Activated CD4-positive, alpha-beta T cell treated with anti-CD3 and anti-CD28 coated beads for 36 hours (primary cell): ENCODE measurements at regions of chr17 and their contacts with region 1.

Region 1: DNA sequence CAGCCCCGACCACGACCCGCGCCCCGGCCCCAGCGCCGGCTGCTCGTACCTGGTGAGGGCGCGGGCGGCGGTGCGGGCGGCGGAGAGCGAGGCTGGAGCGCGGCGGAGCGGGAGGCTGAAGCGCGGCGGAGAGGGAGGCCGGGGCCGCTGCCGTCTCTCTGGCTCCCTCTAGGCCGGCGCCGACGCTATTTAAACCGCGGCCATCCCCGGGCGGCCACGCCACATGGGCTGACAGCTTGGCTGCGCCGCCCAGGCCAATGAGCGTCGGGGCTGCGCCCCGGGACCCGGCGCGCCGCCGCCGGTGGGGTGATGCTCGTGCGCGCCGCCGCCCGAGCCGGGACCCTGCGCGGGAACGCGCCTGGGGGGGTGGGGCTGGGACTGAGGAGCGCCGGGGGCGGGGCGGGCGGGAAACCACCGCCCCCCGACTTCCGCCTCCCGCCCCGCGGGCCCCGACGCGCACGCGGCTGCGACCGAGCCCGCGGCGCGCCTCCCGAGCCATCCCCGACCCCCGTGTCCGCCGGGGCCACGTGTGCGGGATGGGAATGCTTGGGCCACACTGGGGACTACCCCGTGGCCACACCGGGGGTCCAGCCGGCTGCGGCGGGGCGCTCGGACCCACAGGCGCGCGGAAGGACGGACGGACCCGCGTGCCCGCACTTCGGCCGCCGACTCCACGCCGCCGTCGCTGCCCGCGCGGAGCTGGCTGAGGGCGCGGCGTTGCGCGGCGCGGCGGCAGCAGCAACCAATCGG is at the start of gene FASN:
- DNase-seq: peak; percentile 97
- ATAC-seq: peak; percentile 86
- H3K4me3 Mint-ChIP-seq: peak within 1 kb of the TSS; percentile 78
- H3K27ac Mint-ChIP-seq: peak within 1 kb of the TSS; percentile 19
- H3K4me1 Mint-ChIP-seq: peaks cover 14% of the 10 kb centered on the region
- H3K27me3 Mint-ChIP-seq: no peaks in the 10 kb centered on the region
- total RNA-seq, gene FASN: 239 to 259 TPM

Region 2: DNA sequence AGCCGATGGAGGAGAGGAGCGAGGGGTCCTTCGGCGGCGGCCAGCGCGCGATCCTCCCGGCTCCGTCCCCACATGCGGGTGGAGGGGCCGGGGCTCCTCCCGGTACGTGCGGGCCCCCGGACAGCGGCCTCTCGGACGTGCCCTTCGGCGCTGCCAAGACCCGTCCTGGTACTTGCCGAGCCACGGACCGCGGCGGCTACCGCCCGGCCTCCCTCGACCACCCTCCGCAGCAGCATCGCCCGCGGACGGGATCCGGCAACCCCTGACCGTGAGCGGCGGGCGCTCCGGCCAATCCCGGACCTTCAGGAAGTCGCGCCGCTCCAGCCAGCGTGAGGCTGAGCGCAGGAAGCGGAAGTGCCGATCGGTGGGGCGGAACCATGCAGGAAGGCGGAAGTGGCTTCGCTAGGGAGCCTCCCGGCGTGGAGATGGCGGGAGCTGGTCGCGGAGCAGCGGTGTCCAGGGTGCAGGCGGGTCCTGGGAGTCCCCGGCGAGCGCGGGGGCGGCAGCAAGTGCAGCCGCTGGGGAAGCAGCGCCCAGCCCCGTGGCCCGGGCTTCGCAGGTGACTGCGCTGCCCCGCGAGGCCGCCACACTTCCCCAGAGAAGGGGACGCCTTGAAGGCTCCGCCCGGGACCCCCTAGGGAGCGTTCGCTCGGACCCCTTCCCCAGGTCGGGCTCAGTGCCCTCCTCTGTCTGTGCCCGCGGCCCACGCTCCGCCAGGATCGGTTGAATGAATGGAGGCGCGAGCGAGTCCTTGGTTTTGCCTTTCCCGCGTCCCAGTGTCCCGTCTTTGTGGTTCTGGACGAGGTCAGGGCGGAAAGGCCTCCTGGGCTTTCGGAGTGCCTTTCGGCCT is 431.7 kb before region 1 on chr17 and contains the starts of genes CCDC137 and OXLD1:
- CTCF ChIA-PET with region 1: no interaction called
- POLR2A ChIA-PET with region 1: no interaction called
- intact Hi-C with region 1: loop called in 1 of 2 experiments (anchors 1 kb)
- DNase-seq: peak; percentile 97
- ATAC-seq: peak; percentile 91
- H3K4me3 Mint-ChIP-seq: peak within 1 kb of the TSS; percentile 91
- H3K27ac Mint-ChIP-seq: peak within 1 kb of the TSS; percentile 97
- H3K4me1 Mint-ChIP-seq: peaks cover 53% of the 10 kb centered on the region
- H3K27me3 Mint-ChIP-seq: no peaks in the 10 kb centered on the region
- total RNA-seq, gene CCDC137: 30.0 to 36.6 TPM
- total RNA-seq, gene OXLD1: 29.4 to 45.3 TPM

Region 3: DNA sequence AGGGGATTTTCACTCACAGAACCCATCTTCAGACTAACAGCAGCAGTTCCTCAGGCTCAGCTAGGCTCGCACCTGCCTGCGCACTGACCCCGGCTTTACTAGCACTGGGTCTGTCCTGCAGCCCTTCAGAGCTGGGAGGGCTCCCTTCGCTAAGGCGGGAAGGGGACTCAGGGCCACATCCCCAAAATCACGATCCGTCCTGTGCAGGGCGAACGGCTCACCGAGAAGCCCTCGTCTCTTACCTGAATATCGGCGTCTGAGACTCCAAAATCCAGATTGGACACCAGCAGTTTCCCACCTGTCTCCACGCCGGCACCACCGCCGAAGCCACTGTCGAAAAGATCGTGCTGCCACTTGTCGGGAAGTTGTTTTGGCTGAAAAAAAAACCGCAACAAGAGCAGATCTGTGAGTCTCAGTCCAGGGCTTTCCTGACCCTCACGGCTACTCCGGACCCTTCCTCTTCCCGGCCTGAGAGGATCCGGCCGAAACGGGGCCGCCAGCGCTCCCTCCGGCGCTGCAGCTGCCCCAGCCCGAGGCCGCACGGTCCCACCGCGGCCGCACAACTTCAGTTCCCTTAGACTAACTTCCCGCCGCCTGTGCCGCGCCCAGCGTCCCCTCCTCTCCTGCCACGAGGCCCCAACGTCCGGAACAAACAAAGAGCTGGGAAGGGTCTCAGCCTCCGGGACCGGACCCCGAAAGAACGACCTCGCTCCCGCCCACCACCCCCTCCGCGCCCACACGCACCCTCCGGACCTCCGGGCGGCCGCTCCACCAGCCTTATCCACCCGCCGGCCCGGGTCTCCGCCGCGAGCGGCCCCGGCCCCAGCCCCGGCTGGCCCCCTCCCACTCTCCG is 207.6 kb before region 1 on chr17:
- CTCF ChIA-PET with region 1: no interaction called
- POLR2A ChIA-PET with region 1: no interaction called
- intact Hi-C with region 1: loop called in 1 of 2 experiments (anchors 1 kb)
- DNase-seq: peak; percentile 51
- ATAC-seq: no peak
- H3K4me3 Mint-ChIP-seq: peak overlapping the region; percentile 85
- H3K27ac Mint-ChIP-seq: peak overlapping the region; percentile 93
- H3K4me1 Mint-ChIP-seq: peaks cover 32% of the 10 kb centered on the region
- H3K27me3 Mint-ChIP-seq: no peaks in the 10 kb centered on the region

Region 4: GRCh38 chr17:81967533-81968395 is 130.5 kb before region 1 on chr17:
- CTCF ChIA-PET with region 1: no interaction called
- POLR2A ChIA-PET with region 1: no interaction called
- intact Hi-C with region 1: loop called in 1 of 2 experiments (anchors 2 kb)
- DNase-seq: peak; percentile 95
- ATAC-seq: peak; percentile 95
- H3K4me3 Mint-ChIP-seq: peak overlapping the region; percentile 60
- H3K27ac Mint-ChIP-seq: peak overlapping the region; percentile 88
- H3K4me1 Mint-ChIP-seq: peaks cover 15% of the 10 kb centered on the region
- H3K27me3 Mint-ChIP-seq: no peaks in the 10 kb centered on the region

Region 5: GRCh38 chr17:82051776-82052637 is 46.2 kb before region 1 on chr17 and contains the starts of genes GPS1 and RFNG:
- CTCF ChIA-PET with region 1: no interaction called
- POLR2A ChIA-PET with region 1: interaction called, 3 read pairs
- intact Hi-C with region 1: loop called in 1 of 2 experiments (anchors 1 kb)
- DNase-seq: peak; percentile 90
- ATAC-seq: peak; percentile 91
- H3K4me3 Mint-ChIP-seq: peak within 1 kb of the TSS; percentile 82
- H3K27ac Mint-ChIP-seq: peak within 1 kb of the TSS; percentile 73
- H3K4me1 Mint-ChIP-seq: peaks cover 21% of the 10 kb centered on the region
- H3K27me3 Mint-ChIP-seq: no peaks in the 10 kb centered on the region
- total RNA-seq, gene GPS1: 69.0 to 73.5 TPM
- total RNA-seq, gene RFNG: 16.9 to 17.5 TPM

Region 6: GRCh38 chr17:82086941-82087906 is 11.0 kb before region 1 on chr17:
- CTCF ChIA-PET with region 1: no interaction called
- POLR2A ChIA-PET with region 1: no interaction called
- intact Hi-C with region 1: no loop called
- DNase-seq: no peak
- ATAC-seq: no peak
- H3K4me3 Mint-ChIP-seq: no peak overlapping the region
- H3K27ac Mint-ChIP-seq: no peak overlapping the region
- H3K4me1 Mint-ChIP-seq: no peaks in the 10 kb centered on the region
- H3K27me3 Mint-ChIP-seq: no peaks in the 10 kb centered on the region

Region 7: GRCh38 chr17:82116246-82116645 is 18.0 kb after region 1 on chr17:
- CTCF ChIA-PET with region 1: no interaction called
- POLR2A ChIA-PET with region 1: no interaction called
- intact Hi-C with region 1: no loop called
- DNase-seq: no peak
- ATAC-seq: no peak
- H3K4me3 Mint-ChIP-seq: no peak overlapping the region
- H3K27ac Mint-ChIP-seq: no peak overlapping the region
- H3K4me1 Mint-ChIP-seq: peaks cover 14% of the 10 kb centered on the region
- H3K27me3 Mint-ChIP-seq: no peaks in the 10 kb centered on the region

Region 8: DNA sequence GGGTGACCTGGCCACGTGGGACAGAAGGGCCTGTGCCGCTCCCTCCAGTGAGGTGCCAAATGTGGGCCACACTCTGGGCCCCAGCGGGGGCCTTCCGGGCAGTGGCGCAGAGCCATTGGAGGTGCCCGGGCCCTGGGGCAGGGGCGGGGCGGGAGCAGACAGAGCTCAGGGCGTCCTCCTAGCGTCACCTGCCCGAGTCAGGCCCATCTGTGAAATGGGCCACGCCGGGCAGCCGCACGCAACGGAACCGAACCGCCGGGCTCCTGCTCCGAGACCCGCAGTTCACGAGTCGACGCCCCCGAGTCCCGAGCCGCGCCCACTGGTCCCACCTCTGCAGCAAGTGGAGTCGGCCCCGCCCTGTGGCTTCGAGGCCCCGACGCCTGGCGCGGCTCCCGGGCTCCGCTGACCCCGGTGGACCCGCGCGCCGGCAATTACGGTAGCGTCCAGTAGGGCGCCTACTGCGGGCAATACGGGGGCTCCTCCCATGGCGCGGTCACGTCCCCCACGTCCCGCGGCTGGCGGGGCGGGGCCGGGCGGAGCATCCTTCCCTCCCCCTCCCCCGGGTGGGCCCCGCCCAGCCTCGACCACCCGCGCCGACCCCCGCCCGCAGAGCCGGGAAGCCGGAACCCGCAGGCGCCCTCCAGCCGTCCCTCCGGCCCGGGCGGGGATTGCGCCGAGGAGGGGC is 132.5 kb after region 1 on chr17:
- CTCF ChIA-PET with region 1: no interaction called
- POLR2A ChIA-PET with region 1: no interaction called
- intact Hi-C with region 1: loop called in 1 of 2 experiments (anchors 1 kb)
- DNase-seq: peak; percentile 85
- ATAC-seq: peak; percentile 45
- H3K4me3 Mint-ChIP-seq: peak overlapping the region; percentile 79
- H3K27ac Mint-ChIP-seq: peak overlapping the region; percentile 75
- H3K4me1 Mint-ChIP-seq: peaks cover 9% of the 10 kb centered on the region
- H3K27me3 Mint-ChIP-seq: no peaks in the 10 kb centered on the region

Region 9: DNA sequence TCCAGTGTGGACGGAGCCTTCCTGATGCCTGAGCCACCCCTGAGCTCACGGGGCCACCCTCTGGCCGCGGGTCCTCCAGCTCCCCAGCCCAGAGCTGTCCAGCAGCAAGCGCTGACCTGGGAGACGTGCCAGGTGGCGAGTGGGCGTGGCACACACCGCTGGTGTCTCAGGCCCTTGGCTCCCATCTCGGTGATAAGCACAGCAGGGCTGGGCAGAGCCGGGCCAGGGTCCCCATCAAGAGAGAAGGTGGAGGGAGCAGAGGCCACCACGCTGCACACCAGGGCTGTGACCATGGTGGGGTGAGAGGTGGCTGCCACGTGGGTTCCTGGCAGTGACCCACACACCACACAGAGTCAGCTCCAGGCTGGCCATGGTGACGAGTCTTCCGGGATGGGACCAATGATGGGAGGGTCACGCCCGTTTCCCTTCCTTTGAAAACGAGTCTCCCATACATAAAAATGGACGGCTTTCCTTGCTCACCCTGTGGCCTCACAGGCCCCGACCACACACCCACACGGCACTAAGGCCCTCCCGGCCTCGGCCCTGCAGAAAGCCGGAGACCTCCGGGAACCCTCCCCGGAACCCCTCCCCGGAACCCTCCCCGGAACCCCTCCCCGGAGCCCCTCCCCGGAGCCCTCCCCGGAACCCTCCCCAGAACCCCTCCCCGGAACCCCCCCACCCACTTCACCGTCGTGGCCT is 290.1 kb after region 1 on chr17:
- CTCF ChIA-PET with region 1: no interaction called
- POLR2A ChIA-PET with region 1: no interaction called
- intact Hi-C with region 1: no loop called
- DNase-seq: no peak
- ATAC-seq: no peak
- H3K4me3 Mint-ChIP-seq: no peak overlapping the region
- H3K27ac Mint-ChIP-seq: no peak overlapping the region
- H3K4me1 Mint-ChIP-seq: no peaks in the 10 kb centered on the region
- H3K27me3 Mint-ChIP-seq: peaks cover 2% of the 10 kb centered on the region

Region 10: GRCh38 chr17:82457997-82458864 is 360.0 kb after region 1 on chr17 and contains the start of gene NARF:
- CTCF ChIA-PET with region 1: no interaction called
- POLR2A ChIA-PET with region 1: no interaction called
- intact Hi-C with region 1: loop called in 1 of 2 experiments (anchors 1 kb)
- DNase-seq: peak; percentile 98
- ATAC-seq: peak; percentile 99
- H3K4me3 Mint-ChIP-seq: peak within 1 kb of the TSS; percentile 79
- H3K27ac Mint-ChIP-seq: peak within 1 kb of the TSS; percentile 99
- H3K4me1 Mint-ChIP-seq: peaks cover 28% of the 10 kb centered on the region
- H3K27me3 Mint-ChIP-seq: no peaks in the 10 kb centered on the region
- total RNA-seq, gene NARF: 65.4 to 85.9 TPM

Region 11: GRCh38 chr17:82838409-82839067 is 740.3 kb after region 1 on chr17:
- CTCF ChIA-PET with region 1: no interaction called
- POLR2A ChIA-PET with region 1: no interaction called
- intact Hi-C with region 1: no loop called
- DNase-seq: no peak
- ATAC-seq: no peak
- H3K4me3 Mint-ChIP-seq: no peak overlapping the region
- H3K27ac Mint-ChIP-seq: no peak overlapping the region
- H3K4me1 Mint-ChIP-seq: peaks cover under 1% of the 10 kb centered on the region
- H3K27me3 Mint-ChIP-seq: no peaks in the 10 kb centered on the region